Sigmoid colon (tissue), 7 donors: ENCODE measurements at regions of chr1 and their contacts with region 1.

Region 1: DNA sequence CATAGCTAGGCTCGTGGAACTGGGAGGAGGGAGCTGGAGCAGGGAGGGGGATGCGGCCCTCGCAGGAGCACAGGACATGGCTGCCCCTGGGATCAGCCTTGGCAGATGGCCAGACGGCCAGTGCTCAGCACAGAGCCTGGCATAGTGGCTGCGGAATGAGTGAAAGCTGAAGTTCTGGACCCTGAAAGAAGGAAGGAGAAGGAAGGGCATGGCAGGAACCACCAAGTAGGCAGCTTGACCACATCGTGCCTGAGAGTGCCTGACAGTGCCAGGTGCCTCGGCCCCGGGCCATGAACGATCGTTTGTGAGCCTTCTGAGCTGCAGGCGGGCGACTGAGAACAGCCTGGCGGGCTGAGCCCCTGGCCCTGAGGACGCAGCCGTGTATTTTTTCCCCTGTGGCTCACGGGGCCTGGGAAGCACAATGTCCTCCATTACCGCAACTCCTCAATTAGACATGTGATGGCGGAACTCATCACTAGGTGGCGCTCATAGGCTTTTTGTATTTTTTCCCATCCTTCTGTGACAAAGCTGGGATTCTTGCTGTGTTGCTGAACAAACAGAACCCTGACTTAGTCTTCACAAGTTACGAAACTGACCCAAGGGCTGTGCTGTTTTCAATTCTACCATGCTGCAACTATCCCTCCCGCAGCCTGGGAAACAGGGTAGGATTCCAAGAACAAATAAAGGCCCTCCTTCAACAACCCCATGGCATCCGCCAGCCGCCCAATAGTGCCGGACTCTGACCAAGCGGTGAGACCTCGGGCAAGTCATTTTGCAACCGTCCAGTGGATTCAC is 29.9 kb upstream of the TMEM61 start:
- DNase-seq: peak; percentile 81
- H3K4me3 ChIP-seq: peak overlapping the region in 3 of 4 donors; percentile 3 to 22 (median 19)
- H3K27ac ChIP-seq: peak overlapping the region in 3 of 4 donors; percentile 17 to 58 (median 44)
- H3K4me1 ChIP-seq: peaks cover 0 to 10% (median 6%) of the 10 kb centered on the region in 4 donors
- H3K27me3 ChIP-seq: no peaks in the 10 kb centered on the region
- CTCF ChIP-seq: peak; percentile 62 to 84 (median 72)
- EP300 ChIP-seq: no peak
- POLR2A ChIP-seq: no peak

Region 2: DNA sequence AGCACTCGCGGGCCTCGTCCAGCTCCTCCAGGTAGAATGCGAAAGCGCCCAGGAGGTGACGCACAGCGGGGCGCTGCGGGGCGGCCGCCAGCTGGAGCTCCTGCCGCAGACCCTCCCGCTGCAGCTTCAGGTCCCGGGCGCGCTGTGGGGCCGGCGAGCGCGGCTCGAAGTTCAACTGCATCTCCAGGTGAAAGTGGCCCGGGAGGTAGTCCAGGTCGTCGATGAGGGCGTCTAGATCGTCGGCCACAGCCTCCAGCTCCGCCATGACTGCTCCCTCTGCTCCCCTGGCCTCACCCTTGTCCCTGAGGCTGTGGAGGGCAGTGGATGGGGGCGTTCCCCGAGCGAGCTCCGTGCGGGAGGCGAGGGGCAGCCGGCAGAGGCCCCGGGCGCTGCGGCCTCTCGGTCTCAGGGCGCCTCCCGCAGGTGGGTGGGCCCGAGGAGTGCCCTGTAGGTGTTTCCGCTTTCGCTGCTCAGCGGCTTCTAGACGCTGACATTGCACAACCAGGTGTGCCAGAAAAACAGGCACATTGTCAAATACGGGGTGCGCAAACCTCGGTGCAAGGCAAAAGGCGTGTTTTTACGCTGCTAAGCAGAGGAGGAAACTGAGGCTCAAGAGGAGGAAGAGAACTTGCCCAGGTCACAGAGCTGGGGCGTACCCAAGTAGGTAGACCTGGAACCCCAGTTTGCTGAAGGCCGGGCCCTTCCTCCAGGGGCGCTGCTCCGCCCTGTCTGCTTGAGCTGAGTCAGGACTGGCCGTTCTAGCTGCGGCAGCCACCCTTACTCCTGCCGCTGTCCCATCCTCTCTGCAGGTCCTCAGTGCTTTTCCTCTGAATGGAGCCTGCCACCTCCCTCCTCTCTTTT is 149.4 kb before region 1 on chr1 and contains the start of gene TTC22:
- intact Hi-C with region 1: no loop called
- DNase-seq: peak; percentile 76
- H3K4me3 ChIP-seq: peak within 1 kb of the TSS; percentile 29 to 55 (median 50)
- H3K27ac ChIP-seq: peak within 1 kb of the TSS in 3 of 4 donors; percentile 37 to 68 (median 54)
- H3K4me1 ChIP-seq: peaks cover 0 to 31% (median 19%) of the 10 kb centered on the region in 4 donors
- H3K27me3 ChIP-seq: peaks cover 0 to 25% (median 0%) of the 10 kb centered on the region in 3 donors
- CTCF ChIP-seq: peak in 2 of 4 experiments; percentile 49 to 50
- EP300 ChIP-seq: no peak
- POLR2A ChIP-seq: peak in 1 of 2 donors; percentile 17
- total RNA-seq, gene TTC22: 0.81 to 1.9 (median 0.95) TPM

Region 3: DNA sequence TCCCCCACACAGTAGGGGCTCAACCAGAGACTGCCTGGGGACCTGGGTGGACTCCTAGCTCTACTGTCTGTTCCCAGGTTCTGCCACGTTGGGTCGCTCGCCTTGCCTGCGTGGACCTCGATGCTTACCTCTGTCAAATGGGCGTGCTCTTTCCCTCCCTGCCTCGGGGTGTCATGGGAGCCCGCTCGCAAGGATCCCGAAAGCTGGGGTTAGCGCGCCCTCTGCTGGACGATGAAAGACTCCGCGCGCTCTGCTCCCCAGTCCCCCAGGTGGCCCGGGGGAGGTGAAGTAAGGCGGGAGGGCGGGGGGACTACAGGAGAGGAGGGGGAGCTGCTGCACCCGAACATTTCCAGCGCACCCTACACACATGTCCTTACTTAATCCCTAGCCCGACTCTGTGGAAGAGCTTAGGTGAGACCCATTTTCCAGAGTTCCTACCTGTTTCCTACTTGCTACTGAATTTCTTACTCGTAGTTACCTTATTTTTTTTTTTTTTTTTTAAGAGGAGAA is 45.8 kb after region 1 on chr1:
- intact Hi-C with region 1: loop called (anchors 1 kb)
- DNase-seq: peak; percentile 78
- H3K4me3 ChIP-seq: no peak overlapping the region
- H3K27ac ChIP-seq: no peak overlapping the region
- H3K4me1 ChIP-seq: peaks cover 0 to 11% (median 9%) of the 10 kb centered on the region in 4 donors
- H3K27me3 ChIP-seq: peaks cover 4 to 48% (median 18%) of the 10 kb centered on the region in 3 donors
- CTCF ChIP-seq: peak; percentile 31 to 75 (median 68)
- EP300 ChIP-seq: no peak
- POLR2A ChIP-seq: no peak

Region 4: GRCh38 chr1:55021965-55022546 is 71.5 kb after region 1 on chr1:
- intact Hi-C with region 1: loop called (anchors 2 kb)
- DNase-seq: peak; percentile 83
- H3K4me3 ChIP-seq: no peak overlapping the region
- H3K27ac ChIP-seq: no peak overlapping the region
- H3K4me1 ChIP-seq: no peaks in the 10 kb centered on the region
- H3K27me3 ChIP-seq: no peaks in the 10 kb centered on the region
- CTCF ChIP-seq: peak in 3 of 4 experiments; percentile 43 to 70 (median 59)
- EP300 ChIP-seq: no peak
- POLR2A ChIP-seq: no peak

Region 5: DNA sequence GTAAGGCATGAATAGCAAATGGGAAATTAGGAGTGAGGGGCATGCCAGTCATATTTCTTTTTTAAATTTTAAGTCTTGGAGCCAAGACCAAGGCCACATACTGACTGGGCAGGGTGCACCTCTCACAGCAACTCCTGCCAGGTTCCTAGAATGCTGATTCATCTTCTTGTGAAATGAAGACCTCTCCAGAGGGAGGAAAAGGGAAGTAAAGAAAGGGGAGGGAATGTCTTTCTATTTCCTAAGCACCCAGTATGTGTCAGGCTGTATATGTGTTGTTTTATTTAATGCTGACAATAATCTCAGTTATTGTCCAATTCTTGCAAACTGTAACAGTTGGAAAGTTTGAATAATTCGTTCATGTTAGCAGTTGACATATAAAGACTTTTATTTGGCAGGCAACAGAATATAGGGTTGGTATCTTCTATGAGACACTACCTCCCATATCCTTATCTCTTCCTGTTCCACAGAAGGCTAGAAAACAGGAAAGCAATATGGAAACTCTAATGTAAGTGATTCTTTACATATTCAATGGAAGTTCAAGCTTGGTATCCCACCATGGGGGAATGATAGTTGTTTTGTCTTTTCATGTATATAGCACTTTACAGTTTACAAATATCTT is 523.7 kb after region 1 on chr1:
- intact Hi-C with region 1: no loop called
- DNase-seq: no peak
- H3K4me3 ChIP-seq: no peak overlapping the region
- H3K27ac ChIP-seq: no peak overlapping the region
- H3K4me1 ChIP-seq: no peaks in the 10 kb centered on the region
- H3K27me3 ChIP-seq: no peaks in the 10 kb centered on the region
- CTCF ChIP-seq: no peak
- EP300 ChIP-seq: no peak
- POLR2A ChIP-seq: no peak